WTC11 (cell line): ENCODE measurements at regions of chr2 and their contacts with region 1.

Region 1: GRCh38 chr2:141611-142010 is 95.3 kb upstream of the FAM110C start:
- DNase-seq: no peak
- ATAC-seq: no peak
- H3K4me3 Mint-ChIP-seq: no peak overlapping the region
- H3K27ac Mint-ChIP-seq: no peak overlapping the region
- H3K4me1 Mint-ChIP-seq: peaks cover 66% of the 10 kb centered on the region
- H3K27me3 Mint-ChIP-seq: no peaks in the 10 kb centered on the region; the same call in 1 of the 2 replicates
- CTCF ChIP-seq: no peak

Region 2: GRCh38 chr2:11248-11941 is 130.2 kb before region 1 on chr2:
- CTCF ChIA-PET with region 1: interaction called, 19 read pairs
- POLR2A ChIA-PET with region 1: no interaction called
- DNase-seq: peak; percentile 94
- ATAC-seq: peak; percentile 98
- H3K4me3 Mint-ChIP-seq: no peak overlapping the region
- H3K27ac Mint-ChIP-seq: no peak overlapping the region
- H3K4me1 Mint-ChIP-seq: no peaks in the 10 kb centered on the region
- H3K27me3 Mint-ChIP-seq: peaks cover 5% of the 10 kb centered on the region; the same call in 1 of the 2 replicates
- CTCF ChIP-seq: peak; percentile 100

Region 3: GRCh38 chr2:18402-19271 is 123.0 kb before region 1 on chr2:
- CTCF ChIA-PET with region 1: interaction called, 22 read pairs
- POLR2A ChIA-PET with region 1: interaction called, 3 read pairs
- DNase-seq: no peak
- ATAC-seq: peak; percentile 75
- H3K4me3 Mint-ChIP-seq: no peak overlapping the region
- H3K27ac Mint-ChIP-seq: no peak overlapping the region
- H3K4me1 Mint-ChIP-seq: peaks cover 14% of the 10 kb centered on the region
- H3K27me3 Mint-ChIP-seq: no peaks in the 10 kb centered on the region
- CTCF ChIP-seq: no peak

Region 4: DNA sequence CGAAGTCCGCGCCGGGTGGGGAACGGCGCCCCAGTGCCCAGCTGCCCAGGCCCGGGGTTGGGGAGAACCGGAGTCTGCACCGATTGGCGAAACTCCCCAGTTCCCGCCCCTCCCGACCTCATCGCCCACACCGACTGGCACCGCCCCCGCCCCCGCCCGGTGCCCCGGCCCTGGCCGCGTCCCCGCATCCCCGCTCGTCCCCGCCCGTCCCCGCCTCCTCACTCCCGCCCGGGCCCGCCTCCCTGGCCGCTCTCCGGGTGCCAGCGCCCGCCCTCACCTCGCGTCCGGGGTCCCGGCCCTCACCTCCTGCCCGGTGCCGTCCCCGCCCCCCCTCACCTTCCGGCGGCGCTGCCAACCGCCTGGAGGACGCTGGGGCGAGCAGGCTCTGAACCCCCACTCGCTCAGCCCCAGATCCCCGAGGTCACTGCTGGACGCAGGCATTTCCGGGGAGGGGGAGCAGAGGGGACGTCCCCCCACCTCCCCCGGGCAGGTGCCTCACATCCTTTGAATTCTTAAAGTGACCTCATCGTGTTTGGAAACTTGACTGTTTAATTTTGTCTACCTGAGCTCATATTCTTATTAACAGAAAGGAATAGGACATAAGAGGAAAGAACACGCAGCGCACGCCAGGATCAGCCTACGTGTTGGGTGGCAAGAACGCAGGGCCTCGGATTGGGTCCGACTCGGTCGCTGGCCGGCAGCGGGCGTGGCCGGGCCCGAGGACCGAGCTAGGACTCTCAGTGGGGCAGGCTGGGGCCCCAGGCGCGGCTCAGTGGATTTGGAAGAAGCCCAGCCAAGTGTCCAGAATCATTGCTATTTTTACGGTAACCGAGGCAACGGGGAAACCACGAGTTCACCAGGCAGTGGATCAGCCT is 94.9 kb before region 1 on chr2 and contains the start of gene FAM110C:
- CTCF ChIA-PET with region 1: interaction called, 21 read pairs
- POLR2A ChIA-PET with region 1: no interaction called
- DNase-seq: peak; percentile 71
- ATAC-seq: peak; percentile 56
- H3K4me3 Mint-ChIP-seq: peak within 1 kb of the TSS; percentile 86
- H3K27ac Mint-ChIP-seq: peak within 1 kb of the TSS; percentile 85
- H3K4me1 Mint-ChIP-seq: peaks cover 44% of the 10 kb centered on the region
- H3K27me3 Mint-ChIP-seq: peaks cover 38% of the 10 kb centered on the region
- CTCF ChIP-seq: no peak
- total RNA-seq, gene FAM110C: 6.1 to 7.7 TPM (median 7.3 TPM) in 3 replicates

Region 5: DNA sequence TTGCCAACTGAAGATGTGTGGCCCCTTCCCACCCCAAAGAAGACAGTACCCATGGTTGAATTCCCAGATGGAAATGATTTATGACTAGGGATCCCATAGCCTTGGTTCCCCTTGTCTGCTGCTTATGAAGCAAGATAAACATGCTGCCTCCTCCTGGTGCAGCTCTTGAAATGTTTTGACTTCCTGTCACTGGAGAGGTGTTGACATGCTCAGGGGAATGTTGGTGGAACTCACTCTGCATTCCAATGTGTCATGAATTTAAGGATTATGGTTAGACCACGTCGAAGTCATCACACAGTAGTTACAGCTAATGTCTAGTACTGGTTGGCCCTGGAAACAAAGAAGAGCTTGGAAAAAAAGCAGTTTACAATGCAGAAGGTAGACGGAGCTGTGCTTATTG is 26.3 kb before region 1 on chr2:
- CTCF ChIA-PET with region 1: interaction called, 10 read pairs
- POLR2A ChIA-PET with region 1: no interaction called
- DNase-seq: no peak
- ATAC-seq: peak; percentile 80
- H3K4me3 Mint-ChIP-seq: no peak overlapping the region
- H3K27ac Mint-ChIP-seq: peak overlapping the region; percentile 6; the same call in 1 of the 2 replicates
- H3K4me1 Mint-ChIP-seq: peaks cover 24% of the 10 kb centered on the region
- H3K27me3 Mint-ChIP-seq: no peaks in the 10 kb centered on the region; the same call in 1 of the 2 replicates
- CTCF ChIP-seq: no peak

Region 6: GRCh38 chr2:182509-183122 is 41.0 kb after region 1 on chr2:
- CTCF ChIA-PET with region 1: no interaction called
- POLR2A ChIA-PET with region 1: no interaction called
- DNase-seq: no peak
- ATAC-seq: no peak
- H3K4me3 Mint-ChIP-seq: no peak overlapping the region
- H3K27ac Mint-ChIP-seq: no peak overlapping the region
- H3K4me1 Mint-ChIP-seq: no peaks in the 10 kb centered on the region
- H3K27me3 Mint-ChIP-seq: peaks cover 16% of the 10 kb centered on the region
- CTCF ChIP-seq: no peak